K562 (cell line): ENCODE measurements at regions of chr20 and their contacts with region 1.

Region 1: DNA sequence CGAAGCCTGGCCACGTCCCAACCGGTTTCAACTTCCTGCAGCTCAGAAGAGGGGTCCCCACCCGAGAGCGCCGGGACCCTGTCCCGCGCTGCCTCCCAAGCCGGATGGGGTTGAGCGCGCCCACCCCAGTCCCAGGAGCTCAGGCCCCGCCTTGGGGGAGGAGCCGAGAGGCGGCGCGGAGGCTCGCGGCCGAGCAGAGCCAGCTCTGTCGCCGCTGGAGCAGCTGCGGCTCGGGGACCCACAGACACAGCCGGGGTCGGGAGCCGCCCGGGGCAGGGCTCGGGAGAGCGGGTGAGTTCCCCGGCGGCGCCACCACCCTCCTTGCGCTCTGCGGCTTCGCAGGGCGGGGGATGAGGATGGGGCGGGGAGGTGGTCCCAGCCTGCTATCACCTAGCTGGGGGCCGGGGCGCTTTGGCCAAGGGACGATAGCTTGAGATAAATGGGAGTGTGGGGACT is at the start of gene PPP1R16B:
- DNase-seq: peak; percentile 66 to 86 (median 80)
- ATAC-seq: peak; percentile 97
- H3K4me3 ChIP-seq: peak within 1 kb of the TSS; percentile 55
- H3K27ac ChIP-seq: peak within 1 kb of the TSS; percentile 78
- H3K4me1 ChIP-seq: peaks cover 10 to 27% of the 10 kb centered on the region in 2 experiments
- H3K27me3 ChIP-seq: peaks cover 0 to 10% of the 10 kb centered on the region in 2 experiments; a peak in 2 of 5 replicates
- CTCF ChIP-seq: no peak
- EP300 ChIP-seq: no peak
- POLR2A ChIP-seq: peak; percentile 62; the same call in 1 of the 2 replicates
- RAD21 ChIP-seq: no peak
- polyA plus RNA-seq, gene PPP1R16B: 1.5 to 2.3 TPM

Region 2: DNA sequence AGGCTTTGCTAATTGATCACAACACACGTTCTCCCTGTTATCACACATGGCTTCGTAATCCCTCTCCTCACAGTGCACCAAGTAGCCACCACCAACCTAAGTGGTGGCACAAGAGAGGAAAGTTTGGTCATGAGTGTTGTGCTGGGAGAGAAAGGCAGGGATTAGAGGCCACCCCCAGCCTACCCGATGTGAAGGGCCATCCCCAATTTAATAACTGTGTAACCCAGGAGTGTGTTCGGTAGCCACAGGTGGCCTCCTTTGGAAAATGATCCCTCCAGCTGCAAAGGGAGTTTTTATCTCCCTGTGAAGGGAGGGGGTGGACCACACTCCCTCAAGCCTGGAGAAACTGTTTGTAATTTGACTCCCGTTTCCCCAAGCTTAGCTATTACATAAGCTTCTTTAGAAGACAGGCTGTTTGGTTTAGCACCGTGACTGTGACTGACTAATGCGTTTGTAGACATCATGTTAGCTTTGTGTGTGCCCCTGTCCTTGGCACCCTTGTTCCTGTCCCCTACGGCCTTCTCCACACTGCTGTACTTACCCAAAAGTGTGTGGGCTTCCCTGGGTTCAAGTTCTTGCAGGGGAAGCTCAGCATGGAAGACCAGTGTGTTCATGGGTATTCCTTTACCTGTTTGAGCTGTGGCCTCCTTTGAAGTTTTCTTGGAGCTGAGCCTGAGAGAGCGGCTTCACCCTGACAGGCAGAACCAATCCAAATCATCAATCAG is 20.5 kb after region 1 on chr20:
- CTCF ChIA-PET with region 1: no interaction called
- POLR2A ChIA-PET with region 1: no interaction called
- in situ Hi-C with region 1: no loop called
- intact Hi-C with region 1: loop called (anchors 1 kb)
- DNase-seq: peak in 2 of 4 experiments; percentile 67 to 79
- ATAC-seq: peak; percentile 94
- H3K4me3 ChIP-seq: no peak overlapping the region
- H3K27ac ChIP-seq: peak overlapping the region; percentile 60; the same call in 2 of the 3 replicates
- H3K4me1 ChIP-seq: peaks cover 12 to 30% of the 10 kb centered on the region in 2 experiments
- H3K27me3 ChIP-seq: no peaks in the 10 kb centered on the region
- CTCF ChIP-seq: no peak
- EP300 ChIP-seq: peak; percentile 73
- POLR2A ChIP-seq: no peak
- RAD21 ChIP-seq: no peak

Region 3: DNA sequence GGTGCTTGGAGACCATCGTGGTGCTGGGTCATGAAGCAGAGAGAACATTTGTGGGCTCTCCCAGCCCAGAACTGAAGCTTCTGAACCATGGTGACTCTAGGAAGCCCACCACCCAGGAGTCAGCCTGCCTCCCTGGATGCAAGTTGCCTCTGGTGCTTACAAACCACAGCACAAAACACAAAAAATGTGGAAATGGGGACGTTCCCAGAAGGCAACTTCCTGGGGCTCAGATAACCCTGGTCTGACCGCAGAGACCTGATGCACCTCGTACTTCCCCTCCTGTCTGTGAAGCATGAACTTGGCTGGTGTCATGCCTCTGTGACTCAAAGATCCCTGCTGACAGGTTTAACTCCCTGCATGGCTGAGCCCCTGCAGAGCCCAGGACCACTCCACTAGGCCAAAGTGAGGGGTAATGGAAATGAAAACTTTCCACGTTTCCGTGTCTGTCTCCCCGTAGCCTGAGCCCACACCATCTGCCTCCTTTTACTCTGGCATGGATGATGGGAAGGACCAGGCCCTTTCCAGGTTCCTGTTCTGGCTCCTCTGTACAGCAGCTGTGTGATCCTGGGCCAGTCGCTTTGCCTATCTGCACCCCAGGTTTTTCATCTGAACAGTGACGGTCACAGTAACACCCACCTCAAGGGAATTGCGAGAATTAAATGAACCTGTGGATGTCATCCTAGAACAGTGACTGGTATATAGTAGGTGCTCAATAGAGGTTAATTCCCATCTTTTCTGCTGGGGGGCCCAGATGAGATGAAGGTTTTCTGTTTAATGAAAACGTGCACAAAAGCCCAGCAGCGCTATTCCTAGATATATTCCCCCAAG is 57.7 kb after region 1 on chr20:
- CTCF ChIA-PET with region 1: no interaction called
- POLR2A ChIA-PET with region 1: no interaction called
- in situ Hi-C with region 1: no loop called
- intact Hi-C with region 1: loop called (anchors 5 kb)
- DNase-seq: peak in 3 of 4 experiments; percentile 26 to 75 (median 48)
- ATAC-seq: peak; percentile 45
- H3K4me3 ChIP-seq: no peak overlapping the region
- H3K27ac ChIP-seq: peak overlapping the region; percentile 30; the same call in 2 of the 3 replicates
- H3K4me1 ChIP-seq: peaks cover 30 to 54% of the 10 kb centered on the region in 2 experiments
- H3K27me3 ChIP-seq: no peaks in the 10 kb centered on the region
- CTCF ChIP-seq: no peak
- EP300 ChIP-seq: no peak
- POLR2A ChIP-seq: no peak
- RAD21 ChIP-seq: no peak